Caco-2 (cell line): ENCODE measurements at regions of chr21 and their contacts with region 1.

Region 1: GRCh38 chr21:43866260-43866629 is 1.2 kb downstream of the AGPAT3 start:
- DNase-seq: no peak
- H3K4me3 ChIP-seq: peak overlapping the region; percentile 90
- H3K4me3 Mint-ChIP-seq: peak overlapping the region; percentile 81
- H3K27ac Mint-ChIP-seq: peak overlapping the region; percentile 85
- H3K4me1 ChIP-seq: peaks cover 12% of the 10 kb centered on the region
- H3K4me1 Mint-ChIP-seq: peaks cover 40% of the 10 kb centered on the region
- H3K27me3 ChIP-seq: no peaks in the 10 kb centered on the region
- H3K27me3 Mint-ChIP-seq: no peaks in the 10 kb centered on the region
- CTCF ChIP-seq: no peak

Region 2: DNA sequence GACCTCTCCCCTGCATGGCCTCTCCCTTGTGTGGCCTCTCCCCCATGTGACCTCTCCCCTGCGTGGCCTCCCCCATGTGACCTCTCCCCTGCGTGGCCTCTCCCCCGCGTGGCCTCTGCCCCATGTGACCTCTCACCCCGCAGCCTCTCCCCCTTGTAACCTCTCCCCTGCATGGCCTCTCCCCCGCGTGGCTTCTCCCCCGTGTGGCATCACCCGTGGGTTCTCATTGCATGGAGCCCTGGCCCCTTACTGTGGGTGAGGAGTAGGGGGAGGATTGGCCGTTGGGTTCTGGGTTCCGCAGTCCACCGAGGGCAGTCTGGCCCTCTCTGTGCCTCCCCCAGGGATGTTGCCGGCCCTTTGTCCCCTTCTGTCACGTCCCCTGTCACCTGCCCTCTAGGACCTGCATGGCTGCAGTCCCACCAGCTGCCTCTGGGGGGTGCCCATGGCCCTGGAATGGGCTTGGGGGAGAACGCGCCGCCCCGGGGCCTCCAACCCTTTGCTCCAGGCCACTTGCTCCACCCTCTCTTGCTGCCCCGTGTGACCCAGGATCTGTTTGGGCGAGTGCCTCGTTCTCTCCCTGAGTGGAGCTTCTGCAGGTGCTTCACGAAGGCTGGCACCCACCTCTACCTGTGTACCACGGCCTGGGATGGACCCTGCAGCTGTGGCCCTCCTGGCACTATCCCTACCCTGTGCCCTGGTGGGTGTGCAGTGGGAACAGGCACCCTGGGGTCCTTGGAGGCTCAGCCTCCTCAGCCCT is 55.6 kb before region 1 on chr21:
- CTCF ChIA-PET with region 1: no interaction called
- POLR2A ChIA-PET with region 1: no interaction called
- intact Hi-C with region 1: loop called (anchors 2 kb)
- DNase-seq: peak; percentile 91 to 96
- H3K4me3 ChIP-seq: no peak overlapping the region
- H3K4me3 Mint-ChIP-seq: no peak overlapping the region
- H3K27ac Mint-ChIP-seq: peak overlapping the region; percentile 32
- H3K4me1 ChIP-seq: peaks cover 12% of the 10 kb centered on the region
- H3K4me1 Mint-ChIP-seq: peaks cover 18% of the 10 kb centered on the region
- H3K27me3 ChIP-seq: no peaks in the 10 kb centered on the region
- H3K27me3 Mint-ChIP-seq: no peaks in the 10 kb centered on the region
- CTCF ChIP-seq: peak; percentile 92 to 93

Region 3: DNA sequence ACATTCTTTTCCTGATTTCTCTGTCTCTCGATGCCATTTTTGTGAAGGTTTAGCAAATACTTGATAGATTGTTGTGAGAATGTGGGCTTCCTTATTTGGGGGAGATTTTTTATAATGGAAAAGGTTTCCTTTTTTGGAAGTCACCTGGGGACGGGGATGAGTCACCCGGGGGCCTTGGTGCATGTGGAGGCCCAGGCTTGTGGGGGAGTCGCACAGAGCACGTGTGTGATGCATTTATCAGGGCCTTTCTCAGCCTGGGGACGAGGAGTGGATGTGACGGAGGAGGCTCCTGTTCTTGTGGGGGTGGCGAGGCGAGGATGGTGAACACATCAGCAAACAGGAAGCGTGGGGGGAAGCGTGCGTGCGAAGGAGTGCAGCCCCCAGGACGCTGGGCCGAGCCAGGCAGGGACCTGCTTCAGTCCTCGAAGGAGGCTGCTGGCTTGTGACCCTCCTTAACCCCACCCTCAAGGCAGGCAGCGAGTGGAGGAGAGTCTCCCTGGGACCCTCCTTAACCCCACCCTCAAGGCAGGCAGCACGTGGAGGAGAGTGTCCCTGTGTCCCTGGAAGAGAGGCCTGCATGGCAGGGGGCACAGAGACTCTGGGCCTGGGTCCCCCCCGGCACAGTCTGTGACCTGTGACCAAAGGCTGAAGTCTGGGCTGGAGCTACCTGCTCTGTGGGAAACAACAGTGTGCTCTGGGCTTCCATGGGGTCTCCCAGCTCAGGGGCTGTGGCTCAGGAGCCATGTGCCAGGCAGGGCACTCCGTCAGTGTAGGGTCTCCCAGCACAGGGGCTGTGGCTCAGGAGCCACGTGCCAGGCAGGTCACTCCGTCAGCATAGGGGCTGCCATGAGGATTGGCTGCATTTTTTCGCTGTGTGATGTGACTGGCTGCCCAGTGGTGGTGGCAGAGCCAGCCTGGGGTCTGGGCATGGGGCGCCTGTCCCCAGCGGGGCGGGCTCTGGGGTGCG is 56.0 kb after region 1 on chr21:
- CTCF ChIA-PET with region 1: no interaction called
- POLR2A ChIA-PET with region 1: interaction called, 4 read pairs
- intact Hi-C with region 1: loop called (anchors 5 kb)
- DNase-seq: no peak
- H3K4me3 ChIP-seq: no peak overlapping the region
- H3K4me3 Mint-ChIP-seq: peak overlapping the region; percentile 15
- H3K27ac Mint-ChIP-seq: peak overlapping the region; percentile 86
- H3K4me1 ChIP-seq: peaks cover 60% of the 10 kb centered on the region
- H3K4me1 Mint-ChIP-seq: peaks cover 28% of the 10 kb centered on the region
- H3K27me3 ChIP-seq: no peaks in the 10 kb centered on the region
- H3K27me3 Mint-ChIP-seq: no peaks in the 10 kb centered on the region
- CTCF ChIP-seq: no peak